RWPE1 (cell line): ENCODE measurements at regions of chr4 and their contacts with region 1.

Region 1: DNA sequence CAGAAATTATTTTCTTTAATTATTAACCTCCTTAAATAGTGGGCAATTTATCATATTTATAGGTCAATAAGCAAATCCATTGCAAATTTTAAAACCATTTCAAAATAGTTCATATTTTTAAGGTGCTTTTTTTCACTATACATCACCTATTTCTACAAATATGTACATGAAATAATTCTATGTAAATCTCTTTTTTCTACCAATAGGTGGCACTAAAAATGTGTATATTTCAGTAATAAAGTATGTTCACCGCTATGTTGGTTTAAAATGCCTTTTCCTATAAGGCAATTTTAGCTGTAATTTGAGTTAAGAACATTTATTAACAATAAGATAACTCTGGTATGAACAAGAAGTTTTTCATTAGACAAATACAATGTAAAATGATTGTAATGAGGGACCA is 672.2 kb downstream of the KCTD8 start:
- DNase-seq: peak; percentile 13
- H3K27ac ChIP-seq: no peak overlapping the region
- CTCF ChIP-seq: peak; percentile 37; the same call in 1 of the 2 replicates

Region 2: GRCh38 chr4:43651991-43652390 is 124.4 kb before region 1 on chr4:
- CTCF ChIA-PET with region 1: no interaction called
- POLR2A ChIA-PET with region 1: no interaction called
- DNase-seq: no peak
- H3K27ac ChIP-seq: no peak overlapping the region
- CTCF ChIP-seq: no peak

Region 3: GRCh38 chr4:44425614-44426208 is 649.3 kb after region 1 on chr4:
- CTCF ChIA-PET with region 1: interaction called, 11 read pairs
- POLR2A ChIA-PET with region 1: no interaction called
- DNase-seq: peak; percentile 31
- H3K27ac ChIP-seq: no peak overlapping the region
- CTCF ChIP-seq: peak; percentile 53